ENCODE measurements at regions of chr1 and their contacts with region 1.

Region 1: DNA sequence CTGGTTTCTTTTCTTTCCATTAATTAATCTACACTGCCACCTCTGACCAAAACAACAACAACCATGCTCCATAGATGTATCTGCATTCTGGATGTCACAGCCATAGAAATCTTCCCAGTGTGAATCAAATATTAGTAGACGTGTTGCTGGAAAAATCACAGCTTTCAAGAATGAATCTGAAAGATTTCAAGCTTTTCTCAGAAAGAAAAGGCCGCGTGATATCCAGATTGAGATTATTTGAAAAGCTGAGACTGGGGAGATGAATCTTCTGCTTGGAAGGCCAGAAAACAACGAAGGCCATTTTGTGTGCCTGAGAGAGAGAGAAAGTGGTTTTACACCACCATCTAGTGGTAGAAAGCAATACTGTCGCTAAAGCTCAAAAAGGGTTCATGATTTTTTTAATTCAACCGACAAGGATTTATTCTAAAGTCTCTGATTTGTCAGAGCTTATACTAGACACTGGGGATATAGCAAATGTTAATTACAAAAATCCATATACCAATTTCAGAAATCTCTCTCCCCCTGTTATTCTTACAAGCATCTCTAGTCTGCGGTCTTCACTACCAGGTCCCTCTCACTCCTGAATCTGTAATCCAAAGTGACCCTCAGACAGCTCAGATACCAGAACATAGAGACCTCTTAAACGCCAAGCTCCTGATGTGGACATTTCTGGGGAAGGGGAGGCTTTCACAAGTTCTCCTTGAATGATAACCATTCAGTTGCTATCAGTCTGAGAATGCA is 87.5 kb upstream of the SGIP1 start:
- DNase-seq: no peak
- H3K4me3 ChIP-seq: no peak overlapping the region
- H3K27ac ChIP-seq: no peak overlapping the region
- H3K4me1 ChIP-seq: peaks cover 0 to 12% of the 10 kb centered on the region in 2 donors
- H3K27me3 ChIP-seq: no peaks in the 10 kb centered on the region
- CTCF ChIP-seq: peak; percentile 73 to 87 (median 75)

Region 2: GRCh38 chr1:65687428-65688214 is 758.8 kb before region 1 on chr1:
- intact Hi-C with region 1: no loop called
- DNase-seq: peak in 1 of 2 donors; percentile 88
- H3K4me3 ChIP-seq: no peak overlapping the region
- H3K27ac ChIP-seq: no peak overlapping the region
- H3K4me1 ChIP-seq: peaks cover 0 to 18% of the 10 kb centered on the region in 2 donors
- H3K27me3 ChIP-seq: no peaks in the 10 kb centered on the region
- CTCF ChIP-seq: peak; percentile 84 to 94 (median 93)

Region 3: DNA sequence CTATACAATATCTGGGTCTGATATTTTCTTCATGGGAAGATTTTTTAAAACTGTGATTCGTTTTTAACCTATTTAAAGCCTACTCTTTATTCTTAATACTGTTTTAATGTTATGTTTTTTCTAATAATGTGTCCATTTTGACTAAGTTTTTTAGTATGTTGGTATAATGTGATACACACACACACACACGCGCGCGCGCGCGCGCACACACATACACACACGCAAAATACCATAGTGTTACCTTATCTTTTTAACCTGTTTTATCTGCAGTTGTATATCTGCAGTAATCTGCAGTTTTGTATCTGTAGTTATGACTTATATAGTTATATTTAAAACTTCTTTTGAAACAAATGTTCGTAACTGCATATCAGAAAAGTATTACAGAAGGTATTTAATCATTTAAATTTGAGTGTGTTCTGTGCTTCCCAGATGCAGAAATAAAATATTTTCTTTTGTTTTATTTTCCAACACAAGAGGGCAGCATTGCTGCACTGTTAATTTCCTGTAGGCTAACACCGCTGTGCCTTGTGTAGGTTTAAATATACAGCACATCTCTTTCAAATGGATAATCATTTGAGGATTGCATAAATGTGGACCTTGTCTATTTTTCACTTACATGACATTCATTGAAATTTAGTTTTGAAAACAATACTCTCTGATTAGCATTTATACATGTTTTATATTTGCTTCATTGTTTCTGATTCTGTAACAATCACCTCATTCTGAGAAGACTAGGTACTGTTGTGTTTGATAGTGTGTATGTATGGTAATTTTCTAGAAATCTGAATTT is 487.7 kb before region 1 on chr1:
- intact Hi-C with region 1: loop called (anchors 2 kb)
- DNase-seq: no peak
- H3K4me3 ChIP-seq: no peak overlapping the region
- H3K27ac ChIP-seq: no peak overlapping the region
- H3K4me1 ChIP-seq: no peaks in the 10 kb centered on the region
- H3K27me3 ChIP-seq: no peaks in the 10 kb centered on the region
- CTCF ChIP-seq: peak; percentile 45 to 78 (median 51)

Region 4: DNA sequence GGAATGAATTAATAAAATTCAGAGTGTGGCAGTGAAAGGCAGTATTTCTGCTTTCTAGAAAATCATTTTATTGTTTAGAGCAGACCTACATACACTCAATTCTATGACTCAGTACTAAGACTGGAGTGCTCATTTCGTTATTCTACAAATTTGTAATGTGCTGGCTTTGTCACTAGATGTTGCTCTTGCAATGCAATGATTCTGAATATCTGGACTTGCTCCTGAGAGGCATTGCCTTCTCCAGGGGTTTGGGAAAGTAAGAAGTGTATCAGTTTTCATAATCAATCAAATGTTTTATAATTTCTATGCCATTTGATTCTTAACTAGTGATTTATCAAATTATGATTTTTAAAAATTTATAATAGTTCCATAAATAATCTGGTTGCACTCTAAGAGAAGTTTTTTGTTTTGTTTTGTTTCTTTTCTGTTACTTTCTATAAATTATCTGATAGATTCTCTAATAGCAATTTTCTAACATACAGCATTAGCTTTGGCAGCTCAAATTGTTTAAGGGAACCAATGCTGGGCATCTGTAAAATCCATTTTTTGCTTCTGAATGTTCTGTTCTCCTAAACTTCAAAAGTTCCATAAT is 193.0 kb before region 1 on chr1:
- intact Hi-C with region 1: loop called (anchors 1 kb)
- DNase-seq: no peak
- H3K4me3 ChIP-seq: no peak overlapping the region
- H3K27ac ChIP-seq: no peak overlapping the region
- H3K4me1 ChIP-seq: no peaks in the 10 kb centered on the region
- H3K27me3 ChIP-seq: no peaks in the 10 kb centered on the region
- CTCF ChIP-seq: peak; percentile 72 to 76 (median 74)

Region 5: GRCh38 chr1:66331657-66332547 is 114.5 kb before region 1 on chr1:
- intact Hi-C with region 1: loop called (anchors 5 kb)
- DNase-seq: peak in 1 of 2 donors; percentile 83
- H3K4me3 ChIP-seq: peak overlapping the region; percentile 50 to 65
- H3K27ac ChIP-seq: peak overlapping the region; percentile 80 to 84
- H3K4me1 ChIP-seq: peaks cover 0 to 23% of the 10 kb centered on the region in 2 donors
- H3K27me3 ChIP-seq: no peaks in the 10 kb centered on the region
- CTCF ChIP-seq: peak; percentile 15 to 44 (median 31)

Region 6: GRCh38 chr1:66350001-66350547 is 96.4 kb before region 1 on chr1:
- intact Hi-C with region 1: loop called (anchors 5 kb)
- DNase-seq: no peak
- H3K4me3 ChIP-seq: no peak overlapping the region
- H3K27ac ChIP-seq: no peak overlapping the region
- H3K4me1 ChIP-seq: no peaks in the 10 kb centered on the region
- H3K27me3 ChIP-seq: no peaks in the 10 kb centered on the region
- CTCF ChIP-seq: no peak

Region 7: GRCh38 chr1:66503841-66504470 is 57.5 kb after region 1 on chr1:
- intact Hi-C with region 1: loop called (anchors 2 kb)
- DNase-seq: no peak
- H3K4me3 ChIP-seq: no peak overlapping the region
- H3K27ac ChIP-seq: no peak overlapping the region
- H3K4me1 ChIP-seq: no peaks in the 10 kb centered on the region
- H3K27me3 ChIP-seq: no peaks in the 10 kb centered on the region
- CTCF ChIP-seq: peak; percentile 41 to 65 (median 50)

Region 8: DNA sequence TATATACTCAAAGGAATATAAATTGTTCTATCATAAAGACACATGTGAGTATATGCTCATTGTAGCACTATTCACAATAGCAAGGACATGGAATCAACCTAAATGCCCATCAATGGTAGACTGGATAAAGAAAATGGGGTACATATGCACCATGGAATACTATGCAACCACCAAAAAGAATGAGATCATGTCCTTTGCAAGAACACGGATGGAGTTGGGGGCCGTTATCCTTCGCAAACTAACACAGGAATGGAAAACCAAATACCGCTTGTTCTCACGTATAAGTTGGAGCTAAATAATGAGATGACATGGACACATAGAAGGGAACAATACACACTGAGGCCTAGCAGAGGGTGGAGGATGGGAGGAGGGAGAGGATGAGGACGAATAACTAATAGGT is 71.5 kb after region 1 on chr1:
- intact Hi-C with region 1: no loop called
- DNase-seq: no peak
- H3K4me3 ChIP-seq: no peak overlapping the region
- H3K27ac ChIP-seq: no peak overlapping the region
- H3K4me1 ChIP-seq: no peaks in the 10 kb centered on the region
- H3K27me3 ChIP-seq: no peaks in the 10 kb centered on the region
- CTCF ChIP-seq: no peak

Region 9: GRCh38 chr1:66648901-66649595 is 202.6 kb after region 1 on chr1:
- intact Hi-C with region 1: no loop called
- DNase-seq: no peak
- H3K4me3 ChIP-seq: no peak overlapping the region
- H3K27ac ChIP-seq: no peak overlapping the region
- H3K4me1 ChIP-seq: no peaks in the 10 kb centered on the region
- H3K27me3 ChIP-seq: no peaks in the 10 kb centered on the region
- CTCF ChIP-seq: no peak

Region 10: DNA sequence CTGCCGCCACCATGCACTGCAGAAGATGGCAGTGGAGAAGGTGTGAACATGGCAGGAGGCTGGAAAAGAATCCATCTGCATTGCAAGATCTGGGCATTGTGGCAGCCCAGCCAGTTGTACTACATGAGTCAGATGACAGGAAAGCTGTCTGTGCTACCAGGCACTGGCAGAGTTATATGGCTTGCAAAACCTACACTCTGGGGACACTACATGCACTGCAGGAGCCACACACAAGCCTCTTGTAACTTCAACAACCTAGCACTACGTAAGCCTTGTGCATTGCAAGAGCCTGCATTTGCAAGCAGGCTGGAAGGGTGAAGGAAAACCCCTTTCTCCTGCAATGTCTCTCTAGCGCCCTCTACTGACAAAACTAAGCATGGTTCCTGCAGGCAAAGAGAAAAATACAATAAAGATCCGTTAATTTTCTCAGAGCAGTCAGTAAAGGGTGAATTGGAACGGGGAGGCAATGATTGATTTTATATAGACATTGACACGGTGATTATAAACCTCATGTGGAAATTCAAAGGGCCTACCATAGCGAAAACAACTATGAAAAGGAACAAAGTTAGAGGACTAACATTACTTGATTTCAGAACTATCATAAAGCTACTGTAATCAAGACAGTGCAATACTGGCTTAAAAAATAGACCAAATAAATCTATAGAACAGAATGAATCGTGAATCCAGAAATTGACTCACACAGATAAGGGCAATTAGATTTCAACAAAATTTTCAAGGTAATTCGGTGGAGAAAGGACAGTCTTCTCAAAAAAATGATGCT is 279.6 kb after region 1 on chr1:
- intact Hi-C with region 1: loop called (anchors 5 kb)
- DNase-seq: peak; percentile 11 to 78
- H3K4me3 ChIP-seq: no peak overlapping the region
- H3K27ac ChIP-seq: no peak overlapping the region
- H3K4me1 ChIP-seq: no peaks in the 10 kb centered on the region
- H3K27me3 ChIP-seq: no peaks in the 10 kb centered on the region
- CTCF ChIP-seq: peak; percentile 84 to 98 (median 94)

Region 11: GRCh38 chr1:66981679-66982078 is 535.2 kb after region 1 on chr1:
- intact Hi-C with region 1: no loop called
- DNase-seq: no peak
- H3K4me3 ChIP-seq: peak overlapping the region; percentile 35 to 54
- H3K27ac ChIP-seq: peak overlapping the region; percentile 50 to 59
- H3K4me1 ChIP-seq: peaks cover 0 to 3% of the 10 kb centered on the region in 2 donors
- H3K27me3 ChIP-seq: no peaks in the 10 kb centered on the region
- CTCF ChIP-seq: no peak